ENCODE measurements at regions of chr18 and their contacts with region 1.

Region 1: GRCh38 chr18:21031845-21032244 is 79.8 kb downstream of the ROCK1 start:
- DNase-seq: no peak
- ATAC-seq: no peak
- H3K4me3 ChIP-seq: no peak overlapping the region
- H3K27ac ChIP-seq: no peak overlapping the region
- H3K4me1 ChIP-seq: no peaks in the 10 kb centered on the region
- H3K27me3 ChIP-seq: no peaks in the 10 kb centered on the region
- CTCF ChIP-seq: no peak
- EP300 ChIP-seq: no peak
- POLR2A ChIP-seq: no peak
- RAD21 ChIP-seq: no peak

Region 2: GRCh38 chr18:20988726-20989125 is 43.1 kb before region 1 on chr18:
- CTCF ChIA-PET with region 1: no interaction called
- POLR2A ChIA-PET with region 1: no interaction called
- in situ Hi-C with region 1: no loop called
- intact Hi-C with region 1: loop called (anchors 5 kb)
- DNase-seq: no peak
- ATAC-seq: no peak
- H3K4me3 ChIP-seq: no peak overlapping the region
- H3K27ac ChIP-seq: no peak overlapping the region
- H3K4me1 ChIP-seq: no peaks in the 10 kb centered on the region
- H3K27me3 ChIP-seq: no peaks in the 10 kb centered on the region
- CTCF ChIP-seq: no peak
- EP300 ChIP-seq: no peak
- POLR2A ChIP-seq: no peak
- RAD21 ChIP-seq: no peak

Region 3: GRCh38 chr18:21203096-21203495 is 171.3 kb after region 1 on chr18:
- CTCF ChIA-PET with region 1: no interaction called
- POLR2A ChIA-PET with region 1: no interaction called
- in situ Hi-C with region 1: no loop called
- intact Hi-C with region 1: no loop called
- DNase-seq: no peak
- ATAC-seq: no peak
- H3K4me3 ChIP-seq: no peak overlapping the region
- H3K27ac ChIP-seq: no peak overlapping the region
- H3K4me1 ChIP-seq: no peaks in the 10 kb centered on the region
- H3K27me3 ChIP-seq: peaks cover 4 to 7% of the 10 kb centered on the region in 2 experiments; a peak in 4 of 5 replicates
- CTCF ChIP-seq: no peak
- EP300 ChIP-seq: no peak
- POLR2A ChIP-seq: no peak
- RAD21 ChIP-seq: no peak